Activated CD4-positive, alpha-beta T cell treated with anti-CD3 and anti-CD28 coated beads for 36 hours (primary cell): ENCODE measurements at regions of chr10 and their contacts with region 1.

Region 1: GRCh38 chr10:21114683-21115082 is 217.6 kb upstream of the NEBL start:
- DNase-seq: no peak
- ATAC-seq: no peak
- H3K4me3 Mint-ChIP-seq: no peak overlapping the region
- H3K27ac Mint-ChIP-seq: no peak overlapping the region
- H3K4me1 Mint-ChIP-seq: no peaks in the 10 kb centered on the region
- H3K27me3 Mint-ChIP-seq: peaks cover 12% of the 10 kb centered on the region

Region 2: DNA sequence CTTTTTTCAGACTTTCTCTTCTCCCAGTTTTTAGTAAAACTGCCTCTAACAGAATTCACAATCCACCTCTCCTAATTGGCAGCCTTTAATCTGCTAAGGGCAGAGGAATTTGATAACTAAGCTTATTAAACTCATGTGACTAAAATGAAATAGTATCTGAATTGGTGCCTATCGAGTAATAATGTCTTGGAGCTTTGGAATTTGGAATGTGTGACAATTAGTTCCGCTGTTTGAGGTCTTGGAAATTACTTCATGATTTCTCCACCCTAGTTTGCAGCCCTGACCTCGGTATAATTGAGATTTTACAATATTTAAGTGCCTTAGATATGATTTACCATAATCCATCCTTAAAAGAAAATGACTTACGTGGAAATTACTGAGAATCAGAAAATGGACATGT is 27.2 kb before region 1 on chr10:
- CTCF ChIA-PET with region 1: no interaction called
- POLR2A ChIA-PET with region 1: no interaction called
- intact Hi-C with region 1: no loop called
- DNase-seq: no peak
- ATAC-seq: no peak
- H3K4me3 Mint-ChIP-seq: no peak overlapping the region
- H3K27ac Mint-ChIP-seq: no peak overlapping the region
- H3K4me1 Mint-ChIP-seq: no peaks in the 10 kb centered on the region
- H3K27me3 Mint-ChIP-seq: peaks cover 7% of the 10 kb centered on the region

Region 3: GRCh38 chr10:21100871-21101514 is 13.7 kb before region 1 on chr10:
- CTCF ChIA-PET with region 1: no interaction called
- POLR2A ChIA-PET with region 1: no interaction called
- intact Hi-C with region 1: loop called in 1 of 2 experiments (anchors 1 kb)
- DNase-seq: peak; percentile 28
- ATAC-seq: peak; percentile 86
- H3K4me3 Mint-ChIP-seq: no peak overlapping the region
- H3K27ac Mint-ChIP-seq: no peak overlapping the region
- H3K4me1 Mint-ChIP-seq: peaks cover 15% of the 10 kb centered on the region
- H3K27me3 Mint-ChIP-seq: peaks cover 5% of the 10 kb centered on the region